ENCODE measurements at regions of chr1 and their contacts with region 1.

Region 1: DNA sequence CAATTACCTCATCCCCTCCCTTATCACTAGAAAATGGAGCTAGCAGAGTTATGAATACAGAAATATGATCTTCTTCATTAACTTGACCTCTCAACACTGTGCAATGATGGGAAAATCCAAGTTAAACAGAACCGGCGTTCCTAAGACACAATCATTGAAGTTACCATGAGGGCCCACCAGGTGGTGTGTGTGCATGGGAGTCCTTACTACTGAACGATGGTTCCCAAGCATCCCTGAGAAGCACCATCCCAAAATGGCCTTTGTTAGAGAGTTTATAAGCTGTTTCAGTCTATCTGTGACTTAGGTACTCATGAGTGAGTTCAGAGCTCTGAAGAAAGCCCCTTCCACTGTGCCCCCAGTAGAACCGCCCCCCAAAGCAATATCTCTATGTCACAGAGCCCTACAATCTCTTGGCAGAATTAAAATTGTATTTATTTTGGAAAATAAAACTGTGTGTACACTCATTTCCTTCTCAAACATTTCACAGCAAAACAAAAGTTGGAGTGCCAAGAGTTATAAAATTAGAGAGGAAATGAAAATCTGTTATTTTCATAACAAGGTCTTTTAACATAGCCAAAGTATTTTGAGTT is 56.8 kb downstream of the PLD5 start:
- DNase-seq: no peak
- ATAC-seq: no peak
- H3K4me3 Mint-ChIP-seq: no peak overlapping the region
- H3K27ac Mint-ChIP-seq: no peak overlapping the region
- H3K4me1 Mint-ChIP-seq: no peaks in the 10 kb centered on the region
- H3K27me3 Mint-ChIP-seq: no peaks in the 10 kb centered on the region

Region 2: DNA sequence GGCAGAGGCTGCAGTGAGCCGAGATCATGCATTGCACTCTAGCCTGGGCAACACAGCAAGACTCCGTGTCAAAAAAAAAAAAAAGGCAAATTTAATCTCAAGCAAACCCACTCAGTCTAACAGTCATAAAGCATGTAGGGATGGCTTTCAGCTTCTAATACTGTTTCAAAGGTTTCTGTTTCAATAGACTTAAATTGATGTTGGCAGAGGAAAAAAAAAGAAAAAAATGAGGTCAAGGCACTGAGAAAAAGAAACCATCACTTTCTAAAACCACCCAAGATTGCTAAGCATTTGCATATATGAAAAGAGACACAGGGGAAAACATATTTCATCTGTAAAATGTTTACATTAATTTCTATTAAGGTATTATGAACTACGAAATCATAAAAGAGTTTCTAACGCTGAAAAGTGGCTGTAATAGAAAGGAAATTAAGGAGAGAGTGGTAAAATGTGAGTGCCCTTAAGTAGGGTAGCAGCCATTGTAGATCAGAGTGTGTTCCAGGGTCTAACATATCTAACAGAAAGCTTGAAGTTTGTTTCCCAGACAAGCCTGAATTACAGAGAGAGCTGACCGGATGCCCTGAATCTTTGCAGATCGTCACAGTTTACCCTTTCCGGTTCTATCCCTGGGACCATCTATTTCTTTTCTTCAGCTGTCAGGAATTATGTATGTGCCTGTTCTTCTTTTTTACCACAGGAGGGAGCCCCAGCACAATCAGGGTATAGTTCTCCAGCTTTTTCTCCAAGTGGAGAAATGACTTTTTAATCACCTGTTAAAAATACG is 13.2 kb before region 1 on chr1:
- CTCF ChIA-PET with region 1: interaction called, 11 read pairs
- DNase-seq: no peak
- ATAC-seq: no peak
- H3K4me3 Mint-ChIP-seq: no peak overlapping the region
- H3K27ac Mint-ChIP-seq: no peak overlapping the region
- H3K4me1 Mint-ChIP-seq: no peaks in the 10 kb centered on the region
- H3K27me3 Mint-ChIP-seq: peaks cover 2% of the 10 kb centered on the region

Region 3: DNA sequence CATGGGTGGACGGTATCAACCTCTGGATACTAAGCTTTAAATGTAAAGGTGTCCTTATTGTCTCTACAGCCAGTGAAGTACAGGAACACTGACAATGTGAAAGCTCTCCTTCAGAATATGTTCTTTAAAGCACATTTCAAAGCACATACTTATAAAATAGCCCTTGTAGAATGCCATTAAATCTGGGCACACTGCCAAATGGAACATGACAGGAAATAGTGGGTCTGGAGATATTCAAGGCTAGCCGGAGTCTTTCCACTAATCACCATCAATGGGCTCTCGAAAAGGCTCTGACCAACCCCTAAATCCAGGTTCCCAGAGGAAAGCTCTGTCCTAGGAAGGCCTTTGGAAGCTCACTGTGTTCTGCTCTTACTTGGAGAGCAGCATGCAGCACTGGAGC is 10.3 kb after region 1 on chr1:
- CTCF ChIA-PET with region 1: no interaction called
- DNase-seq: no peak
- ATAC-seq: no peak
- H3K4me3 Mint-ChIP-seq: no peak overlapping the region
- H3K27ac Mint-ChIP-seq: no peak overlapping the region
- H3K4me1 Mint-ChIP-seq: no peaks in the 10 kb centered on the region
- H3K27me3 Mint-ChIP-seq: no peaks in the 10 kb centered on the region

Measured in activated CD8-positive, alpha-beta memory T cell treated with anti-CD3 and anti-CD28 coated beads, Interleukin-2, amount 10 ng/mL, durations not matched to agents 7 days and 5 days (primary cell).